T-cell (primary cell): ENCODE measurements at regions of chr5 and their contacts with region 1.

Region 1: GRCh38 chr5:97062046-97062445 is 80.4 kb downstream of the LIX1 start:
- DNase-seq: no peak
- ATAC-seq: no peak
- H3K4me3 ChIP-seq: no peak overlapping the region
- H3K4me3 Mint-ChIP-seq: no peak overlapping the region
- H3K27ac ChIP-seq: no peak overlapping the region
- H3K27ac Mint-ChIP-seq: no peak overlapping the region
- H3K4me1 ChIP-seq: peaks cover 0 to 8% of the 10 kb centered on the region in 2 experiments
- H3K4me1 Mint-ChIP-seq: peaks cover 0 to 6% (median 2%) of the 10 kb centered on the region in 3 donors
- H3K27me3 ChIP-seq: no peaks in the 10 kb centered on the region
- H3K27me3 Mint-ChIP-seq: no peaks in the 10 kb centered on the region

Region 2: DNA sequence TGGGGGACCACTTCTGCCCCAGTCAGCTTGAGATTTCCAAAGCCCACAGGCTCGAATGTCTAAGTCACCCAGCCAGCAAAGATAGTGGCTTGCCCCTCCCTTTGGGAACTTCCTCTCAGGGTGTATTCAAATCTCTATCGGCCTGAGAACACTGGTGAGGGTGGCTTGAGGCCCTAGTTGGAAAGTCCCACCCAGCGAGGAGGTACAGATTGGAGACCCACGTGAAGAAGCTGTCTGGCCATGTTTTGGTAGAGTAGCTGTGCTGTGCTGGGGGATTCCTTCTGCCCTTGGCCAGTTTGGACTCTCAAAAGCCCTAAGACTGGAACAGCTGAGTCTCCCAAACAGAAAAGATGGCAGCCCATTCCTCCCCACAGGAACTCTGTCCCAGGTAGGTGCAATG is 293.7 kb after region 1 on chr5:
- CTCF ChIA-PET with region 1: no interaction called
- POLR2A ChIA-PET with region 1: no interaction called
- DNase-seq: no peak
- ATAC-seq: no peak
- H3K4me3 ChIP-seq: no peak overlapping the region
- H3K4me3 Mint-ChIP-seq: no peak overlapping the region
- H3K27ac ChIP-seq: no peak overlapping the region
- H3K27ac Mint-ChIP-seq: no peak overlapping the region
- H3K4me1 ChIP-seq: no peaks in the 10 kb centered on the region
- H3K4me1 Mint-ChIP-seq: no peaks in the 10 kb centered on the region
- H3K27me3 ChIP-seq: peaks cover 0 to 6% of the 10 kb centered on the region in 2 experiments
- H3K27me3 Mint-ChIP-seq: no peaks in the 10 kb centered on the region

Region 3: GRCh38 chr5:98839469-98840383 is 1777.7 kb after region 1 on chr5:
- CTCF ChIA-PET with region 1: no interaction called
- POLR2A ChIA-PET with region 1: interaction called in 1 of 2 experiments, 10 read pairs
- DNase-seq: peak in 1 of 35 experiments; percentile 26
- ATAC-seq: peak in 1 of 4 experiments; percentile 37
- H3K4me3 ChIP-seq: no peak overlapping the region
- H3K4me3 Mint-ChIP-seq: peak overlapping the region in 2 of 3 donors; percentile 8 to 22
- H3K27ac ChIP-seq: no peak overlapping the region
- H3K27ac Mint-ChIP-seq: no peak overlapping the region
- H3K4me1 ChIP-seq: no peaks in the 10 kb centered on the region
- H3K4me1 Mint-ChIP-seq: peaks cover 2 to 4% (median 4%) of the 10 kb centered on the region in 3 donors
- H3K27me3 ChIP-seq: no peaks in the 10 kb centered on the region
- H3K27me3 Mint-ChIP-seq: no peaks in the 10 kb centered on the region